ENCODE measurements at regions of chr5 and their contacts with region 1.

Region 1: GRCh38 chr5:81239613-81240012 is 6.5 kb downstream of the CKMT2 start:
- DNase-seq: no peak
- ATAC-seq: no peak

Region 2: DNA sequence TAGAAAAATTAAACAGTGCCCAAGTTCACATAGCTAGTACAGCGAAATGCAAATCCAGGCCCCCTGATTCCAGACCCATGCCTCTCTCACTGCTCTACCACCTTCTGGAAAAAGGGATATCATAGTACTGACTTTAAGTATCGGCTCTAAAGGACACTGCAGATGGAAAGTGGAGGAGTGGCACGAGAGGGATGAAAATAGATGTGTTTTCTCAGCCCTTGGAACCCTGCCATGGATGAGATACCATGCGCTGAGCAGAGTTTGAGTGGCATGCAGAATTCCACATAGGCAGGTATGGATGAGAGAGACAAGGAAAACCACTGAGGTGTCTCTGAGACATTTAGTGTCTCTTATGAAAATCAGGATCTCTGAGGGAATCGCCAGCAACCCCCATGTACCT is 12.3 kb after region 1 on chr5:
- intact Hi-C with region 1: loop called (anchors 2 kb)
- DNase-seq: no peak
- ATAC-seq: peak; percentile 56

Measured in Right ventricle myocardium inferior (tissue), 1 donor.